Activated CD4-positive, alpha-beta T cell treated with anti-CD3 and anti-CD28 coated beads for 36 hours (primary cell): ENCODE measurements at regions of chr12 and their contacts with region 1.

Region 1: DNA sequence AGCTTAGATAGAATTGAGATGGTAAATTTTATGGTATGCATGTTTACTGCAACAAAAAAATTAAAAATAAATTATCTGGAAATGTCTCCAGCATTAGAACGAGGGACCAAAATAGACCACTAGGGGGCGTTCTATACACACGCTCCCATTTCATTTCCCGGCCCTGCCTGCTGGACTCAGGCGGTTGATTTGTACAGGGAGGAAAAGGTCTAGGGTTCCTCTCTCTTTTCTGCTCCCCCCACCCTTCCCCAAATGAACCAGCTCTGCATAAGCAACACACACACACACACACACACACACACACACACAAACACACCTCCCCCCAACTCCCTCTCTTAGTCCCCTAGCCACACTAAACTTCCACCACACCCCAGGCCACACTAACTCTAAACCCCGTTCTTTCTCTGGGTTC is 7.8 kb upstream of the DTX1 start:
- DNase-seq: peak; percentile 78
- ATAC-seq: peak; percentile 88
- H3K4me3 Mint-ChIP-seq: no peak overlapping the region
- H3K27ac Mint-ChIP-seq: no peak overlapping the region
- H3K4me1 Mint-ChIP-seq: peaks cover 21% of the 10 kb centered on the region
- H3K27me3 Mint-ChIP-seq: no peaks in the 10 kb centered on the region

Region 2: GRCh38 chr12:113103756-113104450 is 55.2 kb after region 1 on chr12:
- CTCF ChIA-PET with region 1: interaction called, 30 read pairs
- POLR2A ChIA-PET with region 1: no interaction called
- intact Hi-C with region 1: no loop called
- DNase-seq: peak; percentile 86
- ATAC-seq: peak; percentile 98
- H3K4me3 Mint-ChIP-seq: peak overlapping the region; percentile 62
- H3K27ac Mint-ChIP-seq: peak overlapping the region; percentile 67
- H3K4me1 Mint-ChIP-seq: peaks cover 9% of the 10 kb centered on the region
- H3K27me3 Mint-ChIP-seq: no peaks in the 10 kb centered on the region

Region 3: DNA sequence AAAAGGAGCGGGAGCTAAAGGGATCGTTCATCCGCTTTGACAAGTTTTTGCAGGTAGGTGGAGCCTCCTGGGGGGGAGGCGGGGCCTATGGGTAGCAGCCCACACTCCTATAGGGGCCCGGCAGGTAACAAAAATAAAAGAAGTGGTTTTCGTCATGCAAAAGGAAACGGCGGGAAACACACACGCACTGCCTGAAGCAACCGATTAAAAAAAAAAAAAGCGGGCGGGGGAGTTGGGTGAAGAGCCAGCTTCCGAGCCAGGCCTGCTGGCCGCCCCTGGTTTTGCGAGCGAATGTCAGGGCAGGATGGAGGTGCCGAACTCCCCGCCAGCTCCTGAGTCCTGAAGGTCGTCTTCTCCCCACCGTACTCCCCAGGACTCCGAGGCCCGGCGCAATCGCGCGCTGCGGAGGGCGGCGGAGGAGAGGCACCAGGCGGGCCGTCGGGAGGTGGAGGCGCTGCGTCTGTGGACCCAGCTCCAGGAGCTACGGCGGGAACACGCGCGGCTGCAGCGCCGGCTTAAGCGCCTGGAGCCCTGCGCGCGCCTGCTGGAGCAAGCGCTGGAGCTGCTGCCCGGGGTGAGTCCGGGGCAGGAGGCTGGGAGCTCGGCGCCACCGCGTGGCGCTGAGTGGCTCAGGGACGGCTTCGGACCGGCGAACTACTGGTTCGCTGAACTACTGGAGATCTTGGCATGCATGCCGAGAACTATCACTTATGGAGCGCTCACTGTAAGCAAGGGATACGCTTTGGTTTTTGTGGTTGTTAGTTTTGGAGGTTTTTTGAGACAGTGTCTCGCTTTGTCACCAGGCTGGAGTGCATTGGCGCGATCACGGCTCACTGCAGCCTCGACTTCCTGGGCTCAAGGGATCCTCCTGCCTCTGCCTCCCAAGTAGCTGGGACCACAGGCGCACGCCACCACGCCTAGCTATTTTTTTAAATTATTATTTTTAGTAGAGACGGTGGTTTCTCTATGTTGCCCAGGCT is 104.4 kb after region 1 on chr12:
- CTCF ChIA-PET with region 1: interaction called, 25 read pairs
- POLR2A ChIA-PET with region 1: no interaction called
- intact Hi-C with region 1: loop called (anchors 1 kb)
- DNase-seq: peak; percentile 82
- ATAC-seq: peak; percentile 78
- H3K4me3 Mint-ChIP-seq: peak overlapping the region; percentile 69
- H3K27ac Mint-ChIP-seq: peak overlapping the region; percentile 47
- H3K4me1 Mint-ChIP-seq: peaks cover 17% of the 10 kb centered on the region
- H3K27me3 Mint-ChIP-seq: peaks cover 11% of the 10 kb centered on the region

Region 4: GRCh38 chr12:113422030-113422885 is 373.5 kb after region 1 on chr12 and contains the start of gene SDSL:
- CTCF ChIA-PET with region 1: no interaction called
- POLR2A ChIA-PET with region 1: no interaction called
- intact Hi-C with region 1: loop called in 1 of 2 experiments (anchors 1 kb)
- DNase-seq: peak; percentile 82
- ATAC-seq: peak; percentile 99
- H3K4me3 Mint-ChIP-seq: peak within 1 kb of the TSS; percentile 83
- H3K27ac Mint-ChIP-seq: peak within 1 kb of the TSS; percentile 96
- H3K4me1 Mint-ChIP-seq: peaks cover 11% of the 10 kb centered on the region
- H3K27me3 Mint-ChIP-seq: no peaks in the 10 kb centered on the region
- total RNA-seq, gene SDSL: 1.5 to 3.9 TPM